Posterior vena cava (tissue), 2 donors: ENCODE measurements at regions of chr6 and their contacts with region 1.

Region 1: GRCh38 chr6:157756708-157757429 is 66.2 kb upstream of the SNX9 start:
- DNase-seq: peak; percentile 95

Region 2: DNA sequence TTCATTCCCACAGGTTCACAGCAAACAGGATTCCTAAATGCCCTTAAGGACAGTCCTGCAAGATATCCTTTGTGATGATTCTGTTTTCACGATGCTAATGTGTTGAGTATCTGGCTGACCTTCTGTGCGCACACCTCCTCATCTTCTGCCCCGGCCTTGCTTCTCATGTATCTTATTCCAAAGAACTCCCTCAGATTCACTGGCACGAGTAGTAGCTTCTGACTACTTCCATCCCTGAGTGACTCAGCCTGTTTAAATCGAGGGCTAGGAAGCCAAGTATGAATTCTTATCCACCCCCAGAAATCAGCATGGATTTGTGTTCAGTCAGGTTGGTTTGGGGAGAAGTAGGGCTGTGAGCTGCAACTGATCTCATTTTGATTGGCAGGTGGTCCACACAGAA is 124.0 kb before region 1 on chr6:
- intact Hi-C with region 1: loop called in 1 of 2 experiments (anchors 5 kb)
- DNase-seq: peak; percentile 56

Region 3: DNA sequence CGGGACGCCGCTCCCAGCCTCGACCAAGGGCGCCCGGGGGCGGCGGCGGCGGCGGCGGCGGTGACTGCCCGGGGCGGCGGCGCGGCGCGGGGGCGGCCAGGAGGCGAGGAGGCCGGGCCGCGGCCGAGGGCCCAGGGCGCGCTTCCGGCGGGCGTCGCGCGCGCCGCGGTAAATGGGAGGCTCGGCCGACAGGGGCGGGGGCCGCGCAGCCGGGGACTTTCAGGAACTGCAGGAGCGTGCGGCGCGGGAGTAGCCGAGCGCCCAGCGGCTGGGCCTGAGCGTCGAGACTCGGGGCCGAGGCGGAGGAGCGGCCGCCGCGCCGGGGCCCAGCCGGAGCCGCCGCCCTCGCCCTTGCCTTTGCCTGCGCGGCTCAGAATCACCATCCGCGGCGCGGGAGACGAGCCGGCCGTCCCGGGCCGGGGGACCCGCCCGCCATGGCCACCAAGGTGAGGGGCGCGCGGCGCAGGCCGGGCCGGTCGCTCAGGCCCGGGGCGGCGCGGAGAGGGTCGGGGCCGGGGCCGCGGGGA is 66.2 kb after region 1 on chr6 and contains the start of gene SNX9:
- intact Hi-C with region 1: loop called in 1 of 2 experiments (anchors 10 kb)
- DNase-seq: peak; percentile 96
- total RNA-seq, gene SNX9: 82.2 to 103 TPM

Region 4: GRCh38 chr6:157879873-157880254 is 123.0 kb after region 1 on chr6:
- intact Hi-C with region 1: loop called in 1 of 2 experiments (anchors 5 kb)
- DNase-seq: no peak